Caco-2 (cell line): ENCODE measurements at regions of chr19 and their contacts with region 1.

Region 1: DNA sequence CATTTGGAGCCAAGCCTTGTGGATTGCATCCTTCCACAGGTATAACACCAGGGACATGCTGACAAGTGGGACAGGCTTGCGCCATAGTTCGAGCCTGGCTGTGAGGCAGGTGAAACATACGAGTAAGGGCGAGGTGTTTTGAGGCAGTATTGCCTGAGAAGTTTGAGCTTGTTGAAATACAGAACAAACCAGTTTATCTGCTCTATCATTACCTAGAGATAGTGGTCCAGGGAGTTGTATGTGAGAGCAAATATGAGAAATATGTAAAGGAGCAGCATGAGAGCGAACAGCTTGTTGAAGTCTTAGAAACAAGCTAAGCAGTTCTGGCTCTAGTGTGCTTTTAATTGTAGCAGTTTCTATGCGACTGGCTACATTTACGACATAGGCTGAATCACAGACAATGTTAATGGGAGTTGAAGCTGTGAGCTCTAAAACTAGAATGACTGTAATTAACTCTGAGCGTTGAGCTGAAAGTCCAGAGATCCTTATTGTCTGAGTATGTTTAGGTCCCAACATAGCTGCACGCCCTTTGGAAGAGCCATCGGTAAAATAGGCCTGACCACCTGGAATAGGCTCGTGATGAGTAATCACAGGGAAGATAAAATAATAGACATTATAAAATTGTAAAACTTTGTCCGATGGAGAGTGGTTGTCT is 8.2 kb downstream of the ZNF439 start:
- DNase-seq: peak; percentile 36 to 45
- H3K4me3 ChIP-seq: no peak overlapping the region
- H3K4me3 Mint-ChIP-seq: no peak overlapping the region
- H3K27ac Mint-ChIP-seq: no peak overlapping the region
- H3K4me1 ChIP-seq: no peaks in the 10 kb centered on the region
- H3K4me1 Mint-ChIP-seq: peaks cover 14% of the 10 kb centered on the region
- H3K27me3 ChIP-seq: no peaks in the 10 kb centered on the region
- H3K27me3 Mint-ChIP-seq: no peaks in the 10 kb centered on the region
- CTCF ChIP-seq: no peak

Region 2: GRCh38 chr19:11418549-11419506 is 437.9 kb before region 1 on chr19 and contains the start of gene RGL3:
- CTCF ChIA-PET with region 1: no interaction called
- POLR2A ChIA-PET with region 1: interaction called, 13 read pairs
- intact Hi-C with region 1: no loop called
- DNase-seq: peak; percentile 81 to 84
- H3K4me3 ChIP-seq: peak within 1 kb of the TSS; percentile 58
- H3K4me3 Mint-ChIP-seq: peak within 1 kb of the TSS; percentile 92
- H3K27ac Mint-ChIP-seq: peak within 1 kb of the TSS; percentile 89
- H3K4me1 ChIP-seq: no peaks in the 10 kb centered on the region
- H3K4me1 Mint-ChIP-seq: peaks cover 6% of the 10 kb centered on the region
- H3K27me3 ChIP-seq: no peaks in the 10 kb centered on the region
- H3K27me3 Mint-ChIP-seq: no peaks in the 10 kb centered on the region
- CTCF ChIP-seq: no peak
- total RNA-seq, gene RGL3: 53.1 and 58.8 TPM in 2 replicates

Region 3: DNA sequence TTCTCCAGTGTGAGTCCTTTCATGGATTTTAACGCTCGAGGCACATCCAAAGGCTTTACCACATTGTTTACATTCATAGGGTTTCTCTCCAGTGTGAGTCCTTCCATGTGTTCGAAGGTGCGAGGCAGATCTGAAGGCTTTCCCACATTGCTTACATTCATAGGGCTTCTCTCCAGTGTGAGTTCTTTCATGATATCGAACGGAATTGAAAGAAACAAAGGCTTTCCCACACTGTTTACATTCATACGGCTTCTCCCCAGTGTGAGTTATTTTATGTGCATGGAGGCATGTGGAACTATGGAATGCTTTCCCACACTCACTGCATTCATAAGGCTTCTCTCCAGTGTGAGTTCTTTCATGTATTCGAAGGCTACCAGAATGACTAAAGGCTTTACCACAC is 288.6 kb after region 1 on chr19:
- CTCF ChIA-PET with region 1: no interaction called
- POLR2A ChIA-PET with region 1: no interaction called
- intact Hi-C with region 1: no loop called
- DNase-seq: no peak
- H3K4me3 ChIP-seq: no peak overlapping the region
- H3K4me3 Mint-ChIP-seq: no peak overlapping the region
- H3K27ac Mint-ChIP-seq: no peak overlapping the region
- H3K4me1 ChIP-seq: no peaks in the 10 kb centered on the region
- H3K4me1 Mint-ChIP-seq: peaks cover 8% of the 10 kb centered on the region
- H3K27me3 ChIP-seq: no peaks in the 10 kb centered on the region
- H3K27me3 Mint-ChIP-seq: no peaks in the 10 kb centered on the region
- CTCF ChIP-seq: no peak